B cell (primary cell): ENCODE measurements at regions of chr4 and their contacts with region 1.

Region 1: DNA sequence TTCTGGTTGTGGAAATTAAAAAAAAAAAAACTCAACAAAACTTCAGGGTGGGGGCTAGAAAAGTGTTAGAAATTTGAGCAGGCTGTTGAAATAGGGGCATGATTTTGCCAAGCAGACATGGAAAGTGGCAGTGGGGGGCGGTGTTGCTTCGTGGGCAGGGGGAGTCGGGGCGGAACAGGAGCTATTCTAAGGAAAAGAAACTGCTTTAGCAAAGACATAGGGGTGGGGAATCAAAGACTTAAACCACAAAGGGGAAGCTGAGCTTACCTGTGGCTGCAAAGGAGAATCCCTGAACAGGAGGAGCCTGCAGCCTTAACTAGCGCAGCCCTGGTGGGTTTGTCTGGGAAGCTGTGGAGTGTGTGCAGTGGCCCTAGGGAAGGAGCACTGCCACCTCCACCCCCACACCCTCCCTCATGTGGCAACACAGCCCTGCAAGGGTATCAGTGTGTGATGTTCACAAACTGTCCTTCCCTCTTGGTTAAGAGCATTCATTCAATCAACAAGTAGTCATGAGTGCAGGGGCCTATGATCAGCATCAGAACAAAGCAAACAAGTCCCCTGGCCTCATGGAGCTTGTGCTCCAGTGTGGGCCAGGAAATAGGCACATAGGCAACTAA is 20.5 kb downstream of the SEL1L3 start:
- DNase-seq: peak; percentile 85
- ATAC-seq: peak; percentile 90
- H3K4me3 ChIP-seq: peak overlapping the region in 1 of 5 experiments; percentile 12
- H3K4me3 Mint-ChIP-seq: peak overlapping the region; percentile 38
- H3K27ac ChIP-seq: peak overlapping the region; percentile 13 to 61
- H3K27ac Mint-ChIP-seq: peak overlapping the region; percentile 57
- H3K4me1 ChIP-seq: peaks cover 30 to 53% of the 10 kb centered on the region in 2 donors
- H3K4me1 Mint-ChIP-seq: peaks cover 77% of the 10 kb centered on the region
- H3K27me3 ChIP-seq: no peaks in the 10 kb centered on the region
- H3K27me3 Mint-ChIP-seq: no peaks in the 10 kb centered on the region
- CTCF ChIP-seq: peak; percentile 73

Region 2: GRCh38 chr4:25792200-25792791 is 50.0 kb before region 1 on chr4:
- CTCF ChIA-PET with region 1: no interaction called
- POLR2A ChIA-PET with region 1: no interaction called
- intact Hi-C with region 1: no loop called
- DNase-seq: peak; percentile 22
- ATAC-seq: peak; percentile 7
- H3K4me3 ChIP-seq: no peak overlapping the region
- H3K4me3 Mint-ChIP-seq: no peak overlapping the region
- H3K27ac ChIP-seq: no peak overlapping the region
- H3K27ac Mint-ChIP-seq: peak overlapping the region; percentile 26
- H3K4me1 ChIP-seq: no peaks in the 10 kb centered on the region
- H3K4me1 Mint-ChIP-seq: peaks cover 7% of the 10 kb centered on the region
- H3K27me3 ChIP-seq: no peaks in the 10 kb centered on the region
- H3K27me3 Mint-ChIP-seq: no peaks in the 10 kb centered on the region
- CTCF ChIP-seq: no peak

Region 3: GRCh38 chr4:25818371-25818871 is 23.9 kb before region 1 on chr4:
- CTCF ChIA-PET with region 1: no interaction called
- POLR2A ChIA-PET with region 1: no interaction called
- intact Hi-C with region 1: no loop called
- DNase-seq: no peak
- ATAC-seq: no peak
- H3K4me3 ChIP-seq: no peak overlapping the region
- H3K4me3 Mint-ChIP-seq: no peak overlapping the region
- H3K27ac ChIP-seq: no peak overlapping the region
- H3K27ac Mint-ChIP-seq: no peak overlapping the region
- H3K4me1 ChIP-seq: no peaks in the 10 kb centered on the region
- H3K4me1 Mint-ChIP-seq: no peaks in the 10 kb centered on the region
- H3K27me3 ChIP-seq: no peaks in the 10 kb centered on the region
- H3K27me3 Mint-ChIP-seq: no peaks in the 10 kb centered on the region
- CTCF ChIP-seq: no peak

Region 4: GRCh38 chr4:25862411-25863346 is 20.3 kb after region 1 on chr4 and contains the start of gene SEL1L3:
- CTCF ChIA-PET with region 1: interaction called, 25 read pairs
- POLR2A ChIA-PET with region 1: interaction called, 6 read pairs
- intact Hi-C with region 1: loop called (anchors 1 kb)
- DNase-seq: peak; percentile 78
- ATAC-seq: peak; percentile 53
- H3K4me3 ChIP-seq: peak within 1 kb of the TSS; percentile 71 to 90 (median 82)
- H3K4me3 Mint-ChIP-seq: peak within 1 kb of the TSS; percentile 93
- H3K27ac ChIP-seq: peak within 1 kb of the TSS; percentile 86 to 88
- H3K27ac Mint-ChIP-seq: peak within 1 kb of the TSS; percentile 95
- H3K4me1 ChIP-seq: peaks cover 78 to 79% of the 10 kb centered on the region in 2 donors
- H3K4me1 Mint-ChIP-seq: peaks cover 78% of the 10 kb centered on the region
- H3K27me3 ChIP-seq: no peaks in the 10 kb centered on the region
- H3K27me3 Mint-ChIP-seq: no peaks in the 10 kb centered on the region
- CTCF ChIP-seq: no peak
- total RNA-seq, gene SEL1L3: 280 and 291 TPM in 2 replicates

Region 5: GRCh38 chr4:25913851-25914669 is 71.7 kb after region 1 on chr4 and contains the start of gene SMIM20:
- CTCF ChIA-PET with region 1: interaction called, 49 read pairs
- POLR2A ChIA-PET with region 1: interaction called, 7 read pairs
- intact Hi-C with region 1: loop called (anchors 1 kb)
- DNase-seq: peak; percentile 95
- ATAC-seq: peak; percentile 94
- H3K4me3 ChIP-seq: peak within 1 kb of the TSS; percentile 89 to 95 (median 93)
- H3K4me3 Mint-ChIP-seq: peak within 1 kb of the TSS; percentile 95
- H3K27ac ChIP-seq: peak within 1 kb of the TSS; percentile 92 to 93
- H3K27ac Mint-ChIP-seq: peak within 1 kb of the TSS; percentile 97
- H3K4me1 ChIP-seq: peaks cover 27 to 35% of the 10 kb centered on the region in 2 donors
- H3K4me1 Mint-ChIP-seq: peaks cover 34% of the 10 kb centered on the region
- H3K27me3 ChIP-seq: no peaks in the 10 kb centered on the region
- H3K27me3 Mint-ChIP-seq: no peaks in the 10 kb centered on the region
- CTCF ChIP-seq: no peak
- total RNA-seq, gene SMIM20: 14.3 and 20.2 TPM in 2 replicates

Region 6: GRCh38 chr4:25970226-25970675 is 127.9 kb after region 1 on chr4:
- CTCF ChIA-PET with region 1: interaction called, 10 read pairs
- POLR2A ChIA-PET with region 1: no interaction called
- intact Hi-C with region 1: no loop called
- DNase-seq: peak; percentile 74
- ATAC-seq: peak; percentile 79
- H3K4me3 ChIP-seq: peak overlapping the region in 1 of 5 experiments; percentile 14
- H3K4me3 Mint-ChIP-seq: peak overlapping the region; percentile 62
- H3K27ac ChIP-seq: no peak overlapping the region
- H3K27ac Mint-ChIP-seq: peak overlapping the region; percentile 12
- H3K4me1 ChIP-seq: peaks cover 26 to 35% of the 10 kb centered on the region in 2 donors
- H3K4me1 Mint-ChIP-seq: peaks cover 34% of the 10 kb centered on the region
- H3K27me3 ChIP-seq: no peaks in the 10 kb centered on the region
- H3K27me3 Mint-ChIP-seq: no peaks in the 10 kb centered on the region
- CTCF ChIP-seq: no peak

Region 7: DNA sequence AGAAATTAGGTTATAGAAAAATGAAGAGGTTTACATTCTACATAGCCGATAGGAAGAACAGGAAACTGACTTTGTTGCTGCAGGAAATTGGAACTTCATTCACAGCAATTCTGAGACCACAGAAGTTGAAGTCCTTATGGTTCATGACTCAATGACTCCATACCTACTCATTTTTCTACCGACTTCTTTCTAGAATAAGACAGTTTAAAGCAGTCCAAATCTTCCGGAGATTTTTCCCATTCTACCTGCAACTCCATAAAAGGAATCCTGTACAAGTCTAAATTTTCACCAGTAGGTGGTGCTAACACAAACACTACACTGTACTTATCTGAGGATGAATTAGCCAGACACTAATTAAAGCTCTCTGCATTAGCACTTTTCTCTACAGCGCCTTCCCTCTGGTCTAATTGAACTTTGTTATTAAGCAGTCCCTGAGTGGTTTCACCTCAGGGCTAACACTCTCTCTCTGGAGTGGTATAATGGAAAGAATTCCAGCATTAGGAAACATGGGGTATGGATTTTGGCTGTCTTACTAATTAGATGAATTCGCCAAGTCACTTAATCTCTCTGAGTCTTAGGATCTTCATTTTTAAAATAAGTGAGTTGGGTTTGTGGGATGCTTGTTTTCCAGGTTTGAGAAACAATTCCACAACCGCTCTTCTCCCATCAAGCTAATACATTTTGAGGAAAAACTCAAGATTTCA is 239.6 kb after region 1 on chr4:
- CTCF ChIA-PET with region 1: interaction called, 15 read pairs
- POLR2A ChIA-PET with region 1: no interaction called
- intact Hi-C with region 1: no loop called
- DNase-seq: peak; percentile 56
- ATAC-seq: peak; percentile 41
- H3K4me3 ChIP-seq: no peak overlapping the region
- H3K4me3 Mint-ChIP-seq: no peak overlapping the region
- H3K27ac ChIP-seq: no peak overlapping the region
- H3K27ac Mint-ChIP-seq: no peak overlapping the region
- H3K4me1 ChIP-seq: no peaks in the 10 kb centered on the region
- H3K4me1 Mint-ChIP-seq: peaks cover 8% of the 10 kb centered on the region
- H3K27me3 ChIP-seq: peaks cover 0 to 10% (median 0%) of the 10 kb centered on the region in 4 experiments
- H3K27me3 Mint-ChIP-seq: peaks cover 5% of the 10 kb centered on the region
- CTCF ChIP-seq: peak; percentile 78